BJ (cell line): ENCODE measurements at regions of chr1 and their contacts with region 1.

Region 1: GRCh38 chr1:3453203-3453761 is 1.2 kb upstream of the ARHGEF16 start:
- DNase-seq: no peak
- H3K4me3 ChIP-seq: no peak overlapping the region
- H3K27me3 ChIP-seq: peaks cover 5% of the 10 kb centered on the region
- CTCF ChIP-seq: peak; percentile 93

Region 2: DNA sequence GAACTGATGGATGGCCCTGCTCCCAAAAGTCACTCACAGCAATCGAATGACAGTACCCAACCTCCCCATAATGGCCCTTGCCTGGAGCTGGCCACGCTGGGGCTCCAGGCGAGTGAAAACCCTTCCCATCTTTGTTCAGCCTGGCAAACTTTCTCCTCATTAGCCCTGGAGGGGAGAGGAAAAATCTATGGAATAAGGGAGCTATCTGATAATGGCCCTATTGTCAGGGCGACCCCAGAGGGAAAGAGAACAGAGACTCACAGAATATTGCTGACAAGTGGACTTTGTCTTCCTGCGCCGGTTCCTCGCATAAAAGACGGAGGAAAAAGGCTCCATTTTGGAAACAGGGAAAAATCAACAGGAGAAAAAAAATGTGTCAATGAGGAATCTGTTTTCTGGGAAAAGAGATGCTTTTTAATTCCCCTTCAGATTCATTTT is 11.9 kb before region 1 on chr1:
- CTCF ChIA-PET with region 1: interaction called, 28 read pairs
- POLR2A ChIA-PET with region 1: no interaction called
- DNase-seq: no peak
- H3K4me3 ChIP-seq: no peak overlapping the region
- H3K27me3 ChIP-seq: peaks cover 12% of the 10 kb centered on the region
- CTCF ChIP-seq: no peak

Region 3: DNA sequence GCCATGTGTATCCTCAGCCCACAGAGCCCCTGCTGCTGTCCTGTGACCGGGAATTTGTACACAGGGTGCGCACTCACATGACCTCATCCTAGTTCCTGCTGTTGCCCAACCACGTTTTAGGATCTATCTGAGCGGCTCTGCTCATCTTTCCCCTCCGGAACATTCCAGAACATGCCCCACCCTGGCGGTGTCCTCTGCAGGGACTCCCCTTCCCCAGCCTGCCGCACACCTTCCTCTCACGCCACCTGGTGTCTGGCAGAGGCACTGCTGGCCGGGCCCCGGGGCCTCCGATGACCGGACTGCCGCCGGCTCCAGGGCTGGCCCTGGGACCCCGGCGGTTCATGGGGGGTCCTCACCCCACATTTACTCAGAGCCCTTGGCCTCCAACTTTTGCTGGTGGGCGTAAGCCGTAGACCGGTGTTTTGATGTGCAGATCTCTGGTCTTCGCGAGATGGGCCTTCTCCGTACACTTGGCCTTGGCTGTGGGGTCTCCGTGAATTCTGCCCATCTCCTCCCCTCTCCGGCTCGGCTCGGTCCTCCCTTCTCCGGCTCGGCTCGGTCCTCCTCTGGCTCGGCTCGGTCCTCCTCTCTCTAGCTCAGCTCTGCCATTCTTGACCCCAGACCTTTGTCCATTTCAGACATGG is 30.6 kb after region 1 on chr1:
- CTCF ChIA-PET with region 1: interaction called, 16 read pairs
- POLR2A ChIA-PET with region 1: no interaction called
- DNase-seq: no peak
- H3K4me3 ChIP-seq: no peak overlapping the region
- H3K27me3 ChIP-seq: no peaks in the 10 kb centered on the region
- CTCF ChIP-seq: peak; percentile 82

Region 4: GRCh38 chr1:3618881-3619671 is 165.8 kb after region 1 on chr1:
- CTCF ChIA-PET with region 1: interaction called, 147 read pairs
- POLR2A ChIA-PET with region 1: interaction called, 3 read pairs
- DNase-seq: no peak
- H3K4me3 ChIP-seq: no peak overlapping the region
- H3K27me3 ChIP-seq: no peaks in the 10 kb centered on the region
- CTCF ChIP-seq: peak; percentile 76

Region 5: DNA sequence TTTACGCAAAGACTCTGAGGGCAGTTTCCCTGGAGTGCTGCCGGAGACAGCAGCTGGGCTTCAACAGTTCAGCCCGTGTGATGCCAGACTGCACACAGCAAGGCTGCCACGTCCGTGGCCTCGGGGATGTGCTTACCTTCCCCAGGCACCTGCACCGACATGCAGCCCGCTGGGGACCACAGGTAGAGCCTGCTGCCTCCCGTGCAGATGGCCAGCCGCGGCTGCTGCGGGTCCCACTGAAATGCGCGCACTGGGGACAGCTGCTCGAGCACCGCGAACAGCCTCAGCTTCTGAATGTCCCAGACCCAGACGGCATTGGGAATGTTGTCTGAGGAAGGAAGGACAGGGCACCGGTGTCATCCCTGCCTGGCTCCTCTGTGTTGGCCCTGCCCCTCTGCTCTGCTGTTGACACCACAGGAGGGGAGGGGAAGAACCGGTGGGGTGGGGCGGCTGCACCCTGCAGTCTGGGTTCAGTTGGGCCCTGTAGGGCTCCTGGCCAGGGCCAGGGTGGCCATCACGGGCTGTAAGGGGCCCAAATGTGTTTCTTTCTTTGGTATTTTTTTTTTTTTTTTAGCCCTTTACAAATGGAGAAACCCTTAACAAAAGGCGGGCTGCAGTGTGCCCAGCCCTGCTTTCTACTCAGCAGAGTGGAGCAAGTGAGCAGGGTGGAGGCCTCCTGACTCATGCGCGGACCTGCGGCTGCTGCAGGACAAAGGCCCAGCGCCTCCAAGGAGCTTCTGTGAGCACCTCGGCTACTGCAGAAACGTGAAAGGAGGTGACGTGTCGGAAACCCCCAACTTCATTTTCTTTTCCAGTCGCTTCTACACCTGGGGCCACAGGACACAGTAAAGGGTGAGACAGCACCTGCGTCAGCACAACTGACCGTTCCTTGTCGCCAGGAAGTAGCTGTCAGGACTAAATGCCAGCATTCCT is 178.3 kb after region 1 on chr1:
- CTCF ChIA-PET with region 1: interaction called, 16 read pairs
- POLR2A ChIA-PET with region 1: no interaction called
- DNase-seq: no peak
- H3K4me3 ChIP-seq: no peak overlapping the region
- H3K27me3 ChIP-seq: no peaks in the 10 kb centered on the region
- CTCF ChIP-seq: no peak

Region 6: GRCh38 chr1:3796215-3797061 is 343.2 kb after region 1 on chr1 and contains the start of gene LRRC47:
- CTCF ChIA-PET with region 1: interaction called, 13 read pairs
- POLR2A ChIA-PET with region 1: no interaction called
- DNase-seq: peak; percentile 19
- H3K4me3 ChIP-seq: peak within 1 kb of the TSS; percentile 89
- H3K27me3 ChIP-seq: peaks cover 2% of the 10 kb centered on the region
- CTCF ChIP-seq: peak; percentile 11; the same call in 1 of the 2 replicates
- polyA plus RNA-seq, gene LRRC47: 17.7 and 22.8 TPM in 2 replicates

Region 7: GRCh38 chr1:4018466-4019146 is 565.3 kb after region 1 on chr1:
- CTCF ChIA-PET with region 1: no interaction called
- POLR2A ChIA-PET with region 1: no interaction called
- DNase-seq: no peak
- H3K4me3 ChIP-seq: no peak overlapping the region
- H3K27me3 ChIP-seq: no peaks in the 10 kb centered on the region
- CTCF ChIP-seq: no peak